H1 (cell line): ENCODE measurements at regions of chr7 and their contacts with region 1.

Region 1: DNA sequence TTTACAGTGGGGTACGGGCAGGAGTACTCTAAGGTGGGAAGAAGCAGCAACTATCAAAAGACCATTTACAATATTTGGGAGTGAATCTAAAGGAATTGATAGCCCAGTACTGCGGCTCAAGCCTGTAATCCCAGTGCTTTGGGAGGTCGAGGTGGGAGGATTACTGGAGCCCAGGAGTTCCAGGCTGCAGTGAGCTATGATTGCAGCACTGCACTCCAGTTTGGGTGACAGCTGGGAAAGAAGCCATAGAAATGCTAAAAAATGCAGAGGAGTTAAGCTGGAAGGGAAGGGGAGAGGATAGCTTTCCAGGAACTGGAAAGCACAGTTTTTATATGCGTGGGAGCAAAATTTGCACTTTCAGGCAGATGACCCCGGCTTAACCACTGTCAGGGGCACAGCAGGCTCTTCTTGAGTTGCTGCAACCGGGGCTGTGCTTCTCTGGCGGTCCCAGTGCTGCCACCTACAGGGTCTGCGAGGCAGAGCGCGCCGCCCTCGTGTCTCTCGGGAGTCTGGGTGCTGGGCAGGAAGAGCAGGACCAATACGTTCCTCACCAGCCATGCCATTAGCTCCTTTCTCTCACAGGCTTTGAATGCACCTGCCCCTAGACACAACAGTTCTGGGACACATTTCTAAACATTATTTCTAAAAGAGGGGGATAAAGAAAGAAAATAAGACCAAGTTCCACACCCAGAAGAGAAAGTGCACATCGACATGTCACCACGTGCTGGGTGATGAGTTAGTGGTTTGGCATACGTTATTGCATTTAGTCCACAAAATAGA is 10.1 kb upstream of the BMPER start:
- DNase-seq: peak; percentile 57 to 98
- H3K4me3 ChIP-seq: no peak overlapping the region
- H3K27ac ChIP-seq: no peak overlapping the region
- H3K4me1 ChIP-seq: peaks cover 0 to 3% (median 1%) of the 10 kb centered on the region in 4 experiments; a peak in 2 of 7 replicates
- H3K27me3 ChIP-seq: no peaks in the 10 kb centered on the region
- CTCF ChIP-seq: peak; percentile 84 to 93 (median 88)
- EP300 ChIP-seq: peak in 1 of 2 experiments; percentile 45; a peak in 1 of 3 replicates
- POLR2A ChIP-seq: no peak
- RAD21 ChIP-seq: peak; percentile 76 to 82

Region 2: DNA sequence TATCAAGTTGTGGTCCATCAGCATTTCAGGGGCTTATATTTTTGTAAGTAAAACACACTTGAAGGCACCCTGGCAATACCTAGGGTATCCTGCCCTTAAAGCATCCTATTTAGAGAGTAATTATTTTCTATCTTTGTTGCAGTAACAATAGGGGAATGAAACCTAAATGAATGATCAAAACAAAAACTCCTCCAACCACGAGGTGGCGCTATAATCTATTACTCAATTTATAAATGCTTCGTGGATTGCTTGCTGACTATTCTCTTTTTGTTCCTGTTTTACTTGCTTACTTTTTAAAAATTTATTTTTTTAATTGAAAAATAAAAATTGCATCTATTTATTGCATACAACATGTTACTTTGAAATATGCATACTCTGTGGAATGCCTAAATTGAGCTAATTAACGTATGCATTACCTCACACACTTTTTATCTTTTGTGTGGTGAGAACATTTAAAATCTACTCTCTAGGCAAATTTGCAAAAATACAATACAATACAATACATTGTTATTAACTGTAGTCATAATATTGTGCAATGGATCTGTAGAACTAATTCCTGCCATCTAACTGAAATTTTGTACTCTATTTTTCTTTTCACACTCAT is 137.6 kb before region 1 on chr7:
- CTCF ChIA-PET with region 1: interaction called, 39 read pairs
- POLR2A ChIA-PET with region 1: no interaction called
- DNase-seq: no peak
- H3K4me3 ChIP-seq: no peak overlapping the region
- H3K27ac ChIP-seq: no peak overlapping the region
- H3K4me1 ChIP-seq: peaks cover 0 to 5% (median 3%) of the 10 kb centered on the region in 4 experiments; a peak in 3 of 7 replicates
- H3K27me3 ChIP-seq: no peaks in the 10 kb centered on the region
- CTCF ChIP-seq: peak in 2 of 3 experiments; percentile 18 to 41; a peak in 2 of 4 replicates
- EP300 ChIP-seq: no peak
- POLR2A ChIP-seq: no peak
- RAD21 ChIP-seq: peak; percentile 52

Region 3: DNA sequence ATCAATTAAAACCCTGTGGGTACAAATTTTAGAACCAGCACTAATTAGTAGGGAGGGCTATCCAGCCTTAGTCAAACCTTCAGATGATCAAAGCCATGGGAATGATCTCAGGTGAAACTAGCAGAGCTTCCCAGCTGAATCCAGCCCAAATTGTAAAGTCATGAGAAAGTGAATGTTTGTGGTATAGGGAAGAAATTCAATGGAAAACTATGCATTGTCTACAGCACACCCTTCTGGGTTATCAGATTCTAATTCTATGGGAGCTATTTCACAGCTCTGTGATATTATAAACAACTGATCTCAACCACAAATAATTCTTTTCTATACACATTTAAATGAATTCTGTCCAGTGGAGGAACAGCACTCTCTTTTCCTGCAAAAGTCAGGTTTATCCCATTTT is 14.4 kb before region 1 on chr7:
- CTCF ChIA-PET with region 1: interaction called, 23 read pairs
- POLR2A ChIA-PET with region 1: no interaction called
- DNase-seq: no peak
- H3K4me3 ChIP-seq: no peak overlapping the region
- H3K27ac ChIP-seq: no peak overlapping the region
- H3K4me1 ChIP-seq: no peaks in the 10 kb centered on the region
- H3K27me3 ChIP-seq: no peaks in the 10 kb centered on the region
- CTCF ChIP-seq: no peak
- EP300 ChIP-seq: no peak
- POLR2A ChIP-seq: no peak
- RAD21 ChIP-seq: no peak

Region 4: DNA sequence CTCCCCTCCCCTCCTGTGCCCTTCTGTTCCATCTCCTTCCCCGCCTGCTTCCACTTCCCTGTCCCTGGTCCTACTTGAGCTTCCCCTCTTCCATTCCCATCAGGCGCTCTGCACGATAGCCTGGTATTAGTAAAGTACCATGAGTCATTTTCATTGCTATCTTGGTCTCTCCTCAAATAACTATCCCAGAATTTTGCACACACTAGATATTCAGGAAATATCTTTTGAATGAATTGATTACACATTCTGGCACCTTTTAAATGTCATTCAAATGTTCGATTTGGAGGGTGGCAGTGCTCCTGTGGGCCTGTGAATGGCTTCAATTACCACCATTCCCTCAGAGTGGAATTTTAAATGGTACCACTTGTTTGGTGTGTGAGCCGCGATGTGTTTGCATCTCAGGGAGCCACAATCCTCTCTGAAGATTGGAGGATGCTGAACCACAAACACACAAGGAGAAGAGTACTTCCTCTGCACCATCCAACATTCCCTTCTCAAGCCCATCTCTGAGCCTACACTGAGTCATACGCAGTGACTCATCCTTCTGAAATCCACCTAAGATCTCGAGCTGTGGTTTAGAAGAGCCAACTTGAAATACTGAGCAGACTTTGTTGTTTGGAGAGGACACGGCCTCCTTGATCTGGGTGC is 91.8 kb after region 1 on chr7:
- CTCF ChIA-PET with region 1: no interaction called
- POLR2A ChIA-PET with region 1: no interaction called
- DNase-seq: no peak
- H3K4me3 ChIP-seq: no peak overlapping the region
- H3K27ac ChIP-seq: no peak overlapping the region
- H3K4me1 ChIP-seq: no peaks in the 10 kb centered on the region
- H3K27me3 ChIP-seq: no peaks in the 10 kb centered on the region
- CTCF ChIP-seq: no peak
- EP300 ChIP-seq: no peak
- POLR2A ChIP-seq: no peak
- RAD21 ChIP-seq: no peak